ENCODE measurements at regions of chr17 and their contacts with region 1.

Region 1: GRCh38 chr17:79789534-79790353 is 7.1 kb downstream of the CBX8 start:
- DNase-seq: no peak
- H3K4me3 ChIP-seq: peak overlapping the region in 6 of 7 experiments; percentile 15 to 64 (median 58)
- H3K27ac ChIP-seq: no peak overlapping the region
- H3K4me1 ChIP-seq: peaks cover 0 to 39% (median 25%) of the 10 kb centered on the region in 4 experiments
- H3K27me3 ChIP-seq: peaks cover 0 to 58% (median 27%) of the 10 kb centered on the region in 5 experiments

Region 2: DNA sequence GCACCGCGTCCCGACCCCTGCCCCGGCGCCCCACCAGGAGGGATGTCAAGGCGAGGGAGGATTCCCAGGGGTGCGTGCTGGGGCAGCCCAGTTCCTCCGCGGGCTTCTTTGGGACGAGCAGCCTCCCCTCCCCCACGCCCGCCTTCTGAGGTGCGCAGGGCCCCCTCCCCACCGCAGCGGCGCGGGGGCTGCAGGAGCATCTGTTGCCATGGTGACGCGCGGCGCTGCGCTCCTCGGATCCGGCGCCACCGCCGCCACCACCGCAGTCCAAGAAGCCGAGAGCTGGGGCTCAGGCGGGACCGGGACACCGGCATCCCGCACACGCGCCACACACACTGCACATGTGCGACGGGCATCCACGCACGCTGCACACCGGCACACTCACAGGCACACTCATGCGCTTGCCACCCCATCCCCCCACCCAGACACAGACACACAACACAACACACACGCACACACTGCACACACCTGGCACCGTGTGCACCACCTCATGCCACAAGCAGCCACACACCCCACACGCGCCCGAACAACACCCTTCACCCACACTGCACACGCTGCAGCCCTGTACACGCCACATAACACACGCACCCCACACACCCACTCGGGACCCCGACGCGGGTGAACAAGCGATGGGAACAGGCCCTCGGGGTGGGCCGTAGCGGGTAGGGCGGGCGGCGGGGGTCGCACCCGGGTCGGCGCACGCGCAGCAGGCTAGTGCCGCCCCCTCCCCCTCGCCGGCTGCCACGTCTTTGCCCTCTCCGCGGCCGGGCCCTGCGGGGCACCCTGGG is 42.0 kb before region 1 on chr17:
- CTCF ChIA-PET with region 1: interaction called, 12 read pairs
- POLR2A ChIA-PET with region 1: interaction called, 3 read pairs
- DNase-seq: peak in 2 of 3 donors; percentile 33 to 34
- H3K4me3 ChIP-seq: peak overlapping the region in 2 of 7 experiments; percentile 26 to 28
- H3K27ac ChIP-seq: no peak overlapping the region
- H3K4me1 ChIP-seq: peaks cover 0 to 29% (median 18%) of the 10 kb centered on the region in 4 experiments
- H3K27me3 ChIP-seq: peaks cover 0 to 62% (median 31%) of the 10 kb centered on the region in 5 experiments

Measured in common myeloid progenitor, CD34-positive (primary cell).